B cell (primary cell): ENCODE measurements at regions of chr22 and their contacts with region 1.

Region 1: GRCh38 chr22:46737976-46738646 is at the start of gene CERK:
- DNase-seq: peak; percentile 67
- ATAC-seq: peak; percentile 53
- H3K4me3 ChIP-seq: peak within 1 kb of the TSS; percentile 49 to 82 (median 67)
- H3K4me3 Mint-ChIP-seq: peak within 1 kb of the TSS; percentile 98
- H3K27ac ChIP-seq: peak within 1 kb of the TSS; percentile 20 to 54
- H3K27ac Mint-ChIP-seq: peak within 1 kb of the TSS; percentile 93
- H3K4me1 ChIP-seq: peaks cover 49 to 51% of the 10 kb centered on the region in 2 donors
- H3K4me1 Mint-ChIP-seq: peaks cover 40% of the 10 kb centered on the region
- H3K27me3 ChIP-seq: peaks cover 0 to 3% (median 0%) of the 10 kb centered on the region in 4 experiments
- H3K27me3 Mint-ChIP-seq: no peaks in the 10 kb centered on the region
- CTCF ChIP-seq: no peak
- total RNA-seq, gene CERK: 48.3 and 55.9 TPM in 2 replicates

Region 2: DNA sequence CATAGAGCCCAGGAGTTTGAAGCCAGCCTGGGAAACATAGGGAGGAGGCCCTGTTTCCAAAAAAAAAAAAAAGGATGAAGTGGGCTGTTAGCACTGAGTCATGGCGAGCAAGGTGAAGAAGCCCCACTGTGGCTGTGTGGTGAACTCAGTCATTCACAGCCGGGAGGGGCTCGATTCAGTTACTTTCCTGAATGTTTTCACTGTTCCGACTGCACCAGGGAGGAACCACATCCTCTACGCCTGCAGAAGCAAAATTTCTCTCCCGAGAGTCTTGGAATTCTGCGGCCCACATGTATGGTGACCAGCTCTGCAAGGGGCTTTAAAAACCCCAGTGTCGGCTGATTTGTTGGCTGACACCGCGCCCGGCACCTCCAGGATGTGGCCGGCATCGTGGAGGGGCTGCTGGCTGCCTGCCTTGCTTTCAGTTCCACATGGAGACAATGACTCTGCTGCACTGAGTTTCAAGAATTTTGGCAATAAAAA is 145.7 kb before region 1 on chr22:
- CTCF ChIA-PET with region 1: interaction called, 3 read pairs
- POLR2A ChIA-PET with region 1: interaction called, 4 read pairs
- intact Hi-C with region 1: loop called (anchors 2 kb)
- DNase-seq: peak; percentile 80
- ATAC-seq: peak; percentile 37
- H3K4me3 ChIP-seq: peak overlapping the region; percentile 5 to 78 (median 51)
- H3K4me3 Mint-ChIP-seq: peak overlapping the region; percentile 92
- H3K27ac ChIP-seq: peak overlapping the region; percentile 70 to 75
- H3K27ac Mint-ChIP-seq: peak overlapping the region; percentile 93
- H3K4me1 ChIP-seq: peaks cover 52 to 81% of the 10 kb centered on the region in 2 donors
- H3K4me1 Mint-ChIP-seq: peaks cover 62% of the 10 kb centered on the region
- H3K27me3 ChIP-seq: no peaks in the 10 kb centered on the region
- H3K27me3 Mint-ChIP-seq: no peaks in the 10 kb centered on the region
- CTCF ChIP-seq: no peak

Region 3: DNA sequence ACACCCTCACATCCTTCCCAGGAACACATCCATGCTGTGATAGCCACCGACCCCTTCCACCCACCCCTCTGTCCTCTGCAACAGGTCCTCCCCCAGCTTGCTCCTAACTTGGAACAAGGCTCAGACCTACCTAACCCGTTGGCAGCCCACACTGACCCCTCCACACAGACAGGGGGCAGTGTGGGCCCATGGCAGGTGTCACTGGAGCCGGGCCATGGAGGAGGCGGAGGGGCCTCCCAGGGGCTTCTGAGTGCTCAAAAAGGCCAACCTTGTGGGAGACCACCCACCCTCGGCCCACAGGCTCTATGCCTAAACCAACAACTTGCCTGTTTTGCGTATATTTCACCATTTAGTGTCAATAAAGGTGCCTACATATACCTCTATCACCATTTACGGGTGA is 57.1 kb before region 1 on chr22:
- CTCF ChIA-PET with region 1: interaction called, 3 read pairs
- POLR2A ChIA-PET with region 1: no interaction called
- intact Hi-C with region 1: loop called (anchors 1 kb)
- DNase-seq: peak; percentile 50
- ATAC-seq: no peak
- H3K4me3 ChIP-seq: no peak overlapping the region
- H3K4me3 Mint-ChIP-seq: no peak overlapping the region
- H3K27ac ChIP-seq: no peak overlapping the region
- H3K27ac Mint-ChIP-seq: no peak overlapping the region
- H3K4me1 ChIP-seq: peaks cover 30 to 34% of the 10 kb centered on the region in 2 donors
- H3K4me1 Mint-ChIP-seq: peaks cover 29% of the 10 kb centered on the region
- H3K27me3 ChIP-seq: peaks cover 0 to 20% (median 0%) of the 10 kb centered on the region in 4 experiments
- H3K27me3 Mint-ChIP-seq: peaks cover 4% of the 10 kb centered on the region
- CTCF ChIP-seq: peak; percentile 47

Region 4: GRCh38 chr22:46762238-46763050 is 24.3 kb after region 1 on chr22 and contains the start of gene TBC1D22A:
- CTCF ChIA-PET with region 1: interaction called, 87 read pairs
- POLR2A ChIA-PET with region 1: interaction called, 6 read pairs
- intact Hi-C with region 1: loop called (anchors 1 kb)
- DNase-seq: peak; percentile 95
- ATAC-seq: peak; percentile 70
- H3K4me3 ChIP-seq: peak within 1 kb of the TSS; percentile 51 to 96 (median 89)
- H3K4me3 Mint-ChIP-seq: peak within 1 kb of the TSS; percentile 96
- H3K27ac ChIP-seq: peak within 1 kb of the TSS; percentile 87 to 93
- H3K27ac Mint-ChIP-seq: peak within 1 kb of the TSS; percentile 99
- H3K4me1 ChIP-seq: peaks cover 48 to 62% of the 10 kb centered on the region in 2 donors
- H3K4me1 Mint-ChIP-seq: peaks cover 59% of the 10 kb centered on the region
- H3K27me3 ChIP-seq: no peaks in the 10 kb centered on the region
- H3K27me3 Mint-ChIP-seq: no peaks in the 10 kb centered on the region
- CTCF ChIP-seq: no peak
- total RNA-seq, gene TBC1D22A: 128 and 141 TPM in 2 replicates

Region 5: GRCh38 chr22:46798366-46799350 is 60.5 kb after region 1 on chr22:
- CTCF ChIA-PET with region 1: interaction called, 83 read pairs
- POLR2A ChIA-PET with region 1: interaction called, 4 read pairs
- intact Hi-C with region 1: loop called (anchors 1 kb)
- DNase-seq: peak; percentile 74
- ATAC-seq: peak; percentile 78
- H3K4me3 ChIP-seq: no peak overlapping the region
- H3K4me3 Mint-ChIP-seq: no peak overlapping the region
- H3K27ac ChIP-seq: peak overlapping the region in 1 of 2 donors; percentile 9
- H3K27ac Mint-ChIP-seq: peak overlapping the region; percentile 83
- H3K4me1 ChIP-seq: peaks cover 7 to 8% of the 10 kb centered on the region in 2 donors
- H3K4me1 Mint-ChIP-seq: peaks cover 47% of the 10 kb centered on the region
- H3K27me3 ChIP-seq: no peaks in the 10 kb centered on the region
- H3K27me3 Mint-ChIP-seq: no peaks in the 10 kb centered on the region
- CTCF ChIP-seq: peak; percentile 79